ENCODE measurements at regions of chr9 and their contacts with region 1.

Region 1: DNA sequence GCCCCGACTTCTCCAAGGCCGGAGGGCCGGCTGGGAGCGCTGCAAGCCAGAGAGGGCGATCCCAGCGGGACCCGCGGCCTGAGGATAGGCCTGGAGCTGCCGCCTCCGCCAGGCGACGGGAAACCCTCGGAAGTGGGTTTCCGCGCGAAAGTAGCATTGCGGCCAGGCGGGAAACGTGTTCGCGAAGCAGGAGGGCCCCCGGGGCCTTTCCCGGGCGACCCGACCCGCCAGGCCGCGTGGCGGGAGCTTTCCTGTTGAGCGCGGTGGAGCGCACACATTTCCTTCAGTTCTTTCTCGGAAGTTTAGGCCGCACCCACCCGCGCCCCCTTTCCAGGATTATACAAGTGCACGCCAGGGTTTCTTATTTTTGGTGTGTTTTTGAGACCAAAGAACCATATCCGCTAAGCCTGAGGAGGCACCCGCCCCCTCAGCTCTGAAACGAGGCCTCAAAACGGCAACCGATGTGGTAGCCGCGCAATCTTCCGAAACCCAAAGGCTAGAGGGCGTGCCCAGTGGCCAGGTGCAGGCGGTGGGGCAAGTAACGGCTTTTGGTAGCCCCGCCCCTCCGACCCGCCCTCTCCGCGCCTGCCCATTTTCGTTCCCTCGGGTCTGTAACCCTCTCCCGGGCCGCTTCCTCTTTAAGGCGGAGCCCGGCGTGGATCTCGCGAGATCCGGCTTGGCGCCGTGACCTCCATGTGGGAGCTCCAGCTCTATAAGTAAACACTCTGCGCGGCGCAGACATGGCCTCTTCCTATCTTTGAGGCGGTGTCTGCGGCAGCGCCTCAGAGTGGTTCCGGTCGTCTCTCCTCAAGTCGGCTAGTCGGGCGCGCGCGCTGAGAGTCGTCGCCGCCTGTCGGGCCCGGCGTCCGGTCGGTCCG is at the start of gene UHRF2:
- DNase-seq: peak; percentile 97
- ATAC-seq: peak; percentile 91
- H3K4me3 ChIP-seq: peak within 1 kb of the TSS; percentile 100
- H3K27ac ChIP-seq: peak within 1 kb of the TSS; percentile 25; the same call in 1 of the 2 replicates
- H3K4me1 ChIP-seq: peaks cover 15% of the 10 kb centered on the region; the same call in 1 of the 2 replicates
- H3K27me3 ChIP-seq: no peaks in the 10 kb centered on the region
- CTCF ChIP-seq: no peak
- total RNA-seq, gene UHRF2: 30.8 and 31.3 TPM in 2 replicates

Region 2: GRCh38 chr9:6008169-6008979 is 404.4 kb before region 1 on chr9:
- CTCF ChIA-PET with region 1: no interaction called
- POLR2A ChIA-PET with region 1: no interaction called
- intact Hi-C with region 1: loop called (anchors 2 kb)
- DNase-seq: peak; percentile 93
- ATAC-seq: peak; percentile 60
- H3K4me3 ChIP-seq: peak overlapping the region; percentile 93
- H3K27ac ChIP-seq: peak overlapping the region; percentile 62
- H3K4me1 ChIP-seq: peaks cover 43% of the 10 kb centered on the region
- H3K27me3 ChIP-seq: no peaks in the 10 kb centered on the region
- CTCF ChIP-seq: no peak

Region 3: DNA sequence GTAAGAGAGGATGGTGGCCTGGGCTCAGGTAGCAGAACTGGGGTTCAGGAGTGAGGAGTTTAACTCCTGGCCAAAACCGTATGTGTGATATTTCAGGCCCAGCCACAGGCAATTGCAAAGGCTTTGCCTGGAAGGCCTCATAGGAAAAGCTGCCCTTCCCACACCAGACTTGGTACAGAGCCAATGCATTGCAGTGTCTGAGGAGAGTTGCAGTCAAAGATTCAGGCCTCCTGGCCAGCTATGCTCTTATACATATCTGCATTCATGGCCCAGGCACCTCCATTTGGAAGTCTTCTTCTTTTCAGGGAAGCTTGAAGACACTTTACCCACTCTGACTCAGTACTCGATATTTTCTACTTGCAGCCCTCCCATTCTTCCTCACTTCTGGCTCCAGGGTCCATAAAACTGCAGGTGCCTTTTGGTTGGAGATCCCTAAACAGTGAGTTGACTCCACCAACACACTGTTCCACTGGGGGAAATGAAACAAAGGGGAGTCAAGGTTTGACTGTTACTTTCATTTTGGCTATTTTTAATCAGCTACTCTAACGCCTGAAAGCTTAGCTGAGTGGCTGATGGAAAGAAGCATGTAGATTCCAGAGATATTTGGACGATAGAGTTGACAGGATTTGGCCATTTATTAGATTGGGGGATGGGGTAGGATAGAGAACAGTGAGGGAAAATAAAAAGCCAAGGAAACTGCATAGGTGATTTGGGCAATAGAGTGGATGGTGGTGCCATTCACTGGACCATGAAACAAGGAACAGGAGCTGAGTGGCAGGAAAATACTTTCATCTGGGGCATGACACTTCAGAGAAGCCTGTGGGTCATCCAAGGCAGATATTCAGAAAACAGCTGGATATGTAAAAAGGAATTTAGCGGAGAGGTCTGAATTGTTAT is 227.7 kb before region 1 on chr9:
- CTCF ChIA-PET with region 1: no interaction called
- POLR2A ChIA-PET with region 1: no interaction called
- intact Hi-C with region 1: no loop called
- DNase-seq: no peak
- ATAC-seq: no peak
- H3K4me3 ChIP-seq: no peak overlapping the region
- H3K27ac ChIP-seq: no peak overlapping the region
- H3K4me1 ChIP-seq: no peaks in the 10 kb centered on the region
- H3K27me3 ChIP-seq: no peaks in the 10 kb centered on the region
- CTCF ChIP-seq: no peak

Region 4: GRCh38 chr9:6353851-6354686 is 58.7 kb before region 1 on chr9:
- CTCF ChIA-PET with region 1: no interaction called
- POLR2A ChIA-PET with region 1: no interaction called
- intact Hi-C with region 1: loop called (anchors 1 kb)
- DNase-seq: peak; percentile 54
- ATAC-seq: peak; percentile 85
- H3K4me3 ChIP-seq: no peak overlapping the region
- H3K27ac ChIP-seq: no peak overlapping the region
- H3K4me1 ChIP-seq: peaks cover 21% of the 10 kb centered on the region
- H3K27me3 ChIP-seq: no peaks in the 10 kb centered on the region
- CTCF ChIP-seq: peak; percentile 73

Region 5: DNA sequence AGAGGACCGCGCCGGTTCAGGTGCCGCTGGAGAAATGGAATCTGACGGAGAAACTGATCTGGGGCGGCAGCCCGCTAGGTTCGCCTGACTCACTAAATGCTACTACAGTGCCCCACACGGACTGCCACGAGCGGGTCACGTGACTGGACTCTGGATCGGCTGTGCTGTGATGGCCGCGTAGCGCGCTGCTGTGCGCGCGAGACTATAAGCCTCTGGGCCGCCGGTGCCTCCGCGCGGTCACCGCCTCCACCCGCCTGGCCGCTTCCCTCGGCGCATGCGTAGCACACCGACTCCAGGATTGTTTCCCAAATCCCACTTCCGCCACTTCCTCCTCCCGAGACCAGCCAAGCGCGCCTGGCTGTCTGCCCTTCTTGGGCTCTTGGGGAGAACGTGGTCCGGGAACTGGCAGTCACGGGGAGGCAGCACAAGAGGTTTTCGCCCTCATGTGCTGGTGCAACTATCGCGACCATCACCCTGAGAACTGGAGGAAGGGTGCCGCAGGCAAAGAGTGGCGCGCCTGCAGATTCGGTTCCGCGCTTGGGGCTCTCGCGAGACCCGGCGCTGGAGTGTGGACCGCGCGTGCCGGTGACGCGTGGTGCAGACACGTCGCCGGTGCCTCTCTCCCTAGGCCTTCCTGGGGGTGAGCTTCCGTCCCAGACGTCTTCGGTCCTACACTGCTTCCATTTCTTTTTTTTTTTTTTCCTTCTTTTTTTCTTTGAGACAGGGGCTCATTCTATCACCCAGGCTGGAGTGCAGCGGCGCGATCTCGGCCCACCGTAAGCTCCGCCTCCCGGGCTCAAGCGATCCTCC is 268.6 kb after region 1 on chr9:
- CTCF ChIA-PET with region 1: no interaction called
- POLR2A ChIA-PET with region 1: no interaction called
- intact Hi-C with region 1: loop called (anchors 5 kb)
- DNase-seq: peak; percentile 95
- ATAC-seq: peak; percentile 93
- H3K4me3 ChIP-seq: peak overlapping the region; percentile 82
- H3K27ac ChIP-seq: peak overlapping the region; percentile 93
- H3K4me1 ChIP-seq: peaks cover 12% of the 10 kb centered on the region
- H3K27me3 ChIP-seq: no peaks in the 10 kb centered on the region
- CTCF ChIP-seq: no peak